Mammary epithelial cell (primary cell): ENCODE measurements at regions of chr14 and their contacts with region 1.

Region 1: DNA sequence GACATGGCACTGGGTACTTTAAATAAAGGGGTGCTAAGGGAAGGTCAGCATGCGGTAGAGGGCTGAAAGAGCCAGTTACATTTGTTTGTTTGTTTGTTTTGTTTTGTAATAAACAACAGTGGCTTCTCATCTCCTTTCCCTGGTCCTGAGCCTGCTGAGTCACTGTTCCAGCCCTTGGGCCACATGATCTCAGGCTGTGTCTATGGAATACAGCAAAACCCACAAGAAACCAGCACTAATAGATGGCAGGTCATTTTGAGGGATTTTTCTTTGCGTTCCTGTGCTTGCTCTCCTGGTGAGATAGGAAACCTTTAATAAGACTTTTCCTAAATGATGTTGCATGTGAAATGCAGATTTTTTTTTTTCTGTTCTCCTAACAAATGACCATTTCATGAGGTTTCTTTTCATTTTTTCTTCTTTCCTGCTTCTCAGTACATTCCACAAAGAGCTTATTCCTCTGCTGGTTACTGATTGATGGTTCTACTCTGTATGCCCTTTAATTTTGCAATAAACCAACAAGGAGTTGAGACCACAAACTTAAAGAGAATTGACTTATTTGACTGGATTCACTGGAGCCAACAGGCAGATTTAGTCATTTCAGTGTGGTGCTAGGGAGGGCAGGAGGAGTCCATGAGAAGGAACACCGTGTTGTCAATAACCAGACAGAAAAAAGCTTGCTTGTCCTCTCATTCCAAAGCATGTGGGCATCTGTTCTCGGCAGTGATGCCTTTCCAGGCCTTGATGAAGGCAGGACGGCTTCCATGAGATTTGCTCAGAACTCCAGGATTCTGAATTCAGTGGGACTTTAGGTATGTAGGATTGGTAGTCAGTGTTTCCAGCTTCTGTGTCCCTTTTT is 459.2 kb downstream of the RAD51B start:
- DNase-seq: peak; percentile 30
- H3K4me3 ChIP-seq: no peak overlapping the region
- H3K27ac ChIP-seq: no peak overlapping the region
- H3K4me1 ChIP-seq: peaks cover 4% of the 10 kb centered on the region
- H3K27me3 ChIP-seq: no peaks in the 10 kb centered on the region
- CTCF ChIP-seq: no peak

Region 2: DNA sequence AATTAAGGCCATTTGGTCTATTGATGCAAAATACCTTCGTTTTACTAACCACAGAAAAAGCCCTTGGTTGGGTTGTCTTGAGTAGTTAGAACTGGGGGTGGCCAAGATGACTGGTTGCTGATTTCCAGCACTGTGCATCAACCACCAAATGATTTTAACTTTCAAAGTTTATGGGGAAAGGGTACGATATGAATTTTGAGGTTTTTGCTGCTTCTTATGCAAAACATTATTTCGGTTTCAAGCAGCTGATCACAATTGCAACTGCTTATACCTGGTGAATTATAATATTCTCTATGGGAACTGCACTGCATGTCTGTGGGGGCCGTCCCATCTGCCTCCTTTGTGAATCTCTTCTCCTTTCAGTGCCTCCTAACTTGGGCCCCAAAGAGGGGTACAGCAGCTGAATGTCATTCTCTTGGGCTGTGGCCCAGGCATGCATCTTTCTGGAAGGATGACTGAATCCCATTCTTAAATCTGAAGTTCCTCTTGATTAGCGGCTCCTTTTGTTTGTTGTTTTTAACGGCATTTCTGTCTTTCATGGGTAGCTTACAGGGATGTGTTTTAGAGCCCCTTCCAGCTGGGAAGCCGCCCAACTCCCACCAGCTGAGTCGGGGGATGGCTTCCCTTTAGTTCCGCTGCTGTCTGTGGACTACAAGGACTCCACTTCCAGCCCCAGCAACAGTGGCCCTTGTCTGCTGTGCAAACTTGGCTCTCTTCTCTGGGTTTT is 34.2 kb after region 1 on chr14:
- CTCF ChIA-PET with region 1: no interaction called
- dilution Hi-C with region 1: no loop called
- in situ Hi-C with region 1: no loop called
- intact Hi-C with region 1: no loop called
- DNase-seq: no peak
- H3K4me3 ChIP-seq: no peak overlapping the region
- H3K27ac ChIP-seq: no peak overlapping the region
- H3K4me1 ChIP-seq: no peaks in the 10 kb centered on the region
- H3K27me3 ChIP-seq: no peaks in the 10 kb centered on the region
- CTCF ChIP-seq: no peak

Region 3: GRCh38 chr14:68322940-68323620 is 44.3 kb after region 1 on chr14:
- CTCF ChIA-PET with region 1: no interaction called
- dilution Hi-C with region 1: loop called (anchors 5 kb)
- in situ Hi-C with region 1: no loop called
- intact Hi-C with region 1: no loop called
- DNase-seq: no peak
- H3K4me3 ChIP-seq: no peak overlapping the region
- H3K27ac ChIP-seq: no peak overlapping the region
- H3K4me1 ChIP-seq: no peaks in the 10 kb centered on the region
- H3K27me3 ChIP-seq: no peaks in the 10 kb centered on the region
- CTCF ChIP-seq: no peak

Region 4: DNA sequence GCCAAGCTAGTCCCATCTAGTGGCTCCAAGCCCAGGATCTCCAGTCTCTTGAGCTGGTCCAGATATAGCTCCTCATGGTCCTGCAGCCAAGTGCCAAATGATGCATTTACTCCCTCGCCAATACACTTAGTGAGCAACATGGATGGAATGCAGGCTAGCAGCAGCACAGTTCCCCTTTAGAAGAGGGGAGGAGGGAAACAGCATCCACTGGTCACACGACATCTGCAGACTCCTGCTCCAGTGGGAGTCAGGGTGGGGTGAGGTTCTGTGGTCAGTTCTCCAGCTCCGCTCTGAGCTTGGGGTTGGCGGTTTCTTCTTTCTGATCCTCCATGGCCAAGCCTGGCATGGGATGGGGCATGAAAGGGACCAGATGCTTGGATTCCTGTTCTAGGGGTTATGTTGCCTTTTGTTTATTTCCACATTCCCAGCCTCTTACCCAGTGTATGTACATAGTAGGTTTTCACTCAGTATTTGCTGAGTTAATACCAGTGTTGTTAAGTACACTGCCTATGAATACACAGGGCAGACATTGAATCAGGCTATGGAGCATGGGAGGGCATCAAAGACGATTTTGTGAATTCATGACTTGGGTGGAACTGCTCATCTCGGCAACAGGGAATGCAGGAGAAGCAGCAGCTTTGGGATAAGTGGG is 1038.4 kb after region 1 on chr14:
- CTCF ChIA-PET with region 1: no interaction called
- dilution Hi-C with region 1: no loop called
- in situ Hi-C with region 1: no loop called
- intact Hi-C with region 1: no loop called
- DNase-seq: peak; percentile 71
- H3K4me3 ChIP-seq: no peak overlapping the region
- H3K27ac ChIP-seq: no peak overlapping the region
- H3K4me1 ChIP-seq: peaks cover 3% of the 10 kb centered on the region
- H3K27me3 ChIP-seq: no peaks in the 10 kb centered on the region
- CTCF ChIP-seq: no peak